Activated CD4-positive, alpha-beta T cell treated with anti-CD3 and anti-CD28 coated beads, Interleukin-2, amount 10 ng/mL, durations not matched to agents 24 days and 14 days (primary cell): ENCODE measurements at regions of chr4 and their contacts with region 1.

Region 1: GRCh38 chr4:121869841-121870656 is at the start of gene BBS7:
- DNase-seq: peak; percentile 99
- H3K4me3 Mint-ChIP-seq: peak within 1 kb of the TSS; percentile 98
- H3K27ac Mint-ChIP-seq: peak within 1 kb of the TSS; percentile 91
- H3K4me1 Mint-ChIP-seq: peaks cover 12% of the 10 kb centered on the region
- H3K27me3 Mint-ChIP-seq: peaks cover 12% of the 10 kb centered on the region
- total RNA-seq, gene BBS7: 18.3 and 18.7 TPM in 2 replicates

Region 2: GRCh38 chr4:121633653-121634052 is 236.4 kb before region 1 on chr4:
- intact Hi-C with region 1: no loop called
- DNase-seq: no peak
- H3K4me3 Mint-ChIP-seq: no peak overlapping the region
- H3K27ac Mint-ChIP-seq: no peak overlapping the region
- H3K4me1 Mint-ChIP-seq: no peaks in the 10 kb centered on the region
- H3K27me3 Mint-ChIP-seq: peaks cover 22% of the 10 kb centered on the region

Region 3: GRCh38 chr4:121696581-121697461 is 173.2 kb before region 1 on chr4 and contains the start of gene ANXA5:
- intact Hi-C with region 1: loop called (anchors 5 kb)
- DNase-seq: peak; percentile 94
- H3K4me3 Mint-ChIP-seq: peak within 1 kb of the TSS; percentile 98
- H3K27ac Mint-ChIP-seq: peak within 1 kb of the TSS; percentile 100
- H3K4me1 Mint-ChIP-seq: peaks cover 39% of the 10 kb centered on the region
- H3K27me3 Mint-ChIP-seq: peaks cover 33% of the 10 kb centered on the region
- total RNA-seq, gene ANXA5: 107 TPM in 2 replicates